ENCODE measurements at regions of chr1 and their contacts with region 1.

Region 1: GRCh38 chr1:8560611-8561544 is 243.0 kb downstream of the SLC45A1 start:
- DNase-seq: no peak
- ATAC-seq: peak in 7 of 8 donors; percentile 50 to 80 (median 72)
- H3K4me3 ChIP-seq: no peak overlapping the region
- H3K27ac ChIP-seq: no peak overlapping the region
- H3K4me1 ChIP-seq: peaks cover 0 to 33% (median 16%) of the 10 kb centered on the region in 9 donors
- H3K27me3 ChIP-seq: no peaks in the 10 kb centered on the region
- CTCF ChIP-seq: peak; percentile 82 to 98 (median 94)

Region 2: DNA sequence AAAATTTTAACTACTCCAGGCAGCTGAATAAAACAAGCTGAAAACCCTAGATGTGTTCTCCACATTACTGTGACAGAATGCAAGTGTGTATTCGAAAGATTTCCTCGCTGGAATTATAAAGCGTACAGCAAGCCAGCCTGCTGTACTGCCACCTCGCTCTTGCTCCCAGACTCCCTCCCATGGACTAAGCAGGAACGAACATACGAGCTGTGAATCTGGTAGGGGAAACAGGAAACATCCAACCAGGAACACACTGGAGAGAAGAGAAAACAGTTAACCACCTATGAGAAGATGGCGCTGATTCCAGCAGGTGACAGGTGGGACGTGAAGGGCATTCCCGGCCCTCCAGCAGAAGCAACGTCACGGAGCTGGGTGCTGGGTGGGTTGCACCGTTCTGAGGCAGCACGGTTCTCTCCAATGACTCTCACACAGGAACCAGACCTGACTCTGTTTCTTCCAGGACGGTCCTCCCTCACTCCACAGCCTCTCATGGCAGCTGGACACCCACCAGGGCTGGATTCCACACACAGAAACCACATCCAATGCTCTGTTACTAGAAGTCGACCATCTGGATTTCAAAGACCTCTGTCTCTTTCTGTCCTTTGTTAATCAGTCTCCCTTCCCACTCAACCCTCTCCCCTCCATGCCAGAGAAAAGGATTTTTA is 37.3 kb after region 1 on chr1:
- intact Hi-C with region 1: loop called in 2 of 10 experiments (anchors 5 kb)
- DNase-seq: peak in 1 of 2 donors; percentile 46
- ATAC-seq: peak; percentile 68 to 91 (median 90)
- H3K4me3 ChIP-seq: peak overlapping the region in 6 of 10 donors; percentile 6 to 42 (median 26)
- H3K27ac ChIP-seq: peak overlapping the region in 9 of 10 donors; percentile 7 to 81 (median 53)
- H3K4me1 ChIP-seq: peaks cover 3 to 61% (median 44%) of the 10 kb centered on the region in 9 donors
- H3K27me3 ChIP-seq: no peaks in the 10 kb centered on the region
- CTCF ChIP-seq: peak in 8 of 9 donors; percentile 31 to 75 (median 52)

Region 3: GRCh38 chr1:8671306-8671917 is 110.5 kb after region 1 on chr1:
- intact Hi-C with region 1: loop called (anchors 1 to 5 kb)
- DNase-seq: peak in 1 of 2 donors; percentile 69
- ATAC-seq: peak in 6 of 8 donors; percentile 62 to 80 (median 75)
- H3K4me3 ChIP-seq: peak overlapping the region in 1 of 10 donors; percentile 10
- H3K27ac ChIP-seq: peak overlapping the region in 3 of 10 donors; percentile 19 to 42 (median 30)
- H3K4me1 ChIP-seq: peaks cover 6 to 73% (median 52%) of the 10 kb centered on the region in 9 donors
- H3K27me3 ChIP-seq: no peaks in the 10 kb centered on the region
- CTCF ChIP-seq: peak; percentile 53 to 93 (median 85)

Region 4: DNA sequence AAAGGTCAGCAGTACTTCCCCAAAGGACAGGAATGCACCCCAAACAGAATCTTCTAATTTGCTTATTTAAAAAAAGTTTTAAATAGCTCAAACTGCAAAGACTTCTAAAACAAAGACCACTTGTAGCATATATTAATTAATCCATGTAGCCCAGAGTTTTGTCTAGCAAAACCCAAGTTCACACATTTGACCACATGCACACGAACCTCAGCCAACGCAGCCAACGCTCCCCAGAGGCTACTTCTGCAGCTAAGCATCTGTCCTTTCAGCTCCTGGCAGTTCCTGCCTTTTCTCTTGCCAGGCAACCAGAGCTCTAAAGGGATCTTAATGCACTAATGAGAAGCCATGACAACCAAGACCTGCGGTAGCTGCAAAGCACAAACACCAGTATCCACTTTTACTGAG is 166.9 kb after region 1 on chr1:
- intact Hi-C with region 1: loop called (anchors 1 to 5 kb)
- DNase-seq: peak; percentile 36 to 41
- ATAC-seq: peak in 7 of 8 donors; percentile 37 to 74 (median 63)
- H3K4me3 ChIP-seq: no peak overlapping the region
- H3K27ac ChIP-seq: no peak overlapping the region
- H3K4me1 ChIP-seq: peaks cover 0 to 30% (median 8%) of the 10 kb centered on the region in 9 donors
- H3K27me3 ChIP-seq: no peaks in the 10 kb centered on the region
- CTCF ChIP-seq: no peak

Region 5: GRCh38 chr1:8754993-8755392 is 194.1 kb after region 1 on chr1:
- intact Hi-C with region 1: no loop called
- DNase-seq: no peak
- ATAC-seq: no peak
- H3K4me3 ChIP-seq: no peak overlapping the region
- H3K27ac ChIP-seq: no peak overlapping the region
- H3K4me1 ChIP-seq: peaks cover 0 to 32% (median 6%) of the 10 kb centered on the region in 9 donors
- H3K27me3 ChIP-seq: no peaks in the 10 kb centered on the region
- CTCF ChIP-seq: no peak

Measured in heart right ventricle (tissue), 16 donors.